ENCODE measurements at regions of chr11 and their contacts with region 1.

Region 1: GRCh38 chr11:67230406-67230805 is 35.9 kb upstream of the GRK2 start:
- DNase-seq: no peak

Region 2: GRCh38 chr11:67202045-67202444 is 28.4 kb before region 1 on chr11:
- intact Hi-C with region 1: loop called in 1 of 2 experiments (anchors 2 kb)
- DNase-seq: no peak

Measured in posterior vena cava (tissue), 2 donors.